Breast epithelium (tissue), 4 donors: ENCODE measurements at regions of chr1 and their contacts with region 1.

Region 1: GRCh38 chr1:37434292-37434907 is 40.0 kb upstream of the ZC3H12A start:
- DNase-seq: peak in 1 of 2 donors; percentile 61
- H3K4me3 ChIP-seq: no peak overlapping the region
- H3K27ac ChIP-seq: no peak overlapping the region
- H3K4me1 ChIP-seq: no peaks in the 10 kb centered on the region
- H3K27me3 ChIP-seq: peaks cover 0 to 16% of the 10 kb centered on the region in 2 donors
- CTCF ChIP-seq: peak; percentile 44 to 91 (median 84)
- POLR2A ChIP-seq: no peak

Region 2: DNA sequence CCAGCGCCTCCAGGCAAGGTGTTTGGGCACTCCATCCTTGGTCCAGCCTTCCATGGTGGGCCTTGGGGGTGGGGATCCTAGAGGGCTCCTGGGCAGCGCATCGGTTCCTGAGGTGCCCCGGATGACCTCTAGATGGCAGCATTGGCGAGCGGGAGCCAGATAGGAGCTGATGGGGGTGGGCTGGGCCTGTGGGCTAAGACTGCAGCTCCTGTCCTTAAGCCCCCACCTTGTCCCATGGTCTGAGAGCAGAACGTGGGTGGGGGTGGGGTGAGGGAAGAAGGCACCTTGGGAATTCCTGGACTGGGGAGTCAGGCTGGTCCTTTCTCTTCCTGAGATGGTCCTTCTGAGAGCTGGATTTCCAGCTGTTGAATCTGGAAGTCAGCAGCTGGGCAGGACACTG is 858.3 kb before region 1 on chr1:
- intact Hi-C with region 1: loop called (anchors 5 kb)
- DNase-seq: no peak
- H3K4me3 ChIP-seq: no peak overlapping the region
- H3K27ac ChIP-seq: no peak overlapping the region
- H3K4me1 ChIP-seq: no peaks in the 10 kb centered on the region
- H3K27me3 ChIP-seq: peaks cover 0 to 37% of the 10 kb centered on the region in 2 donors
- CTCF ChIP-seq: peak in 1 of 3 donors; percentile 60
- POLR2A ChIP-seq: no peak

Region 3: GRCh38 chr1:36703526-36704208 is 730.7 kb before region 1 on chr1:
- intact Hi-C with region 1: loop called (anchors 5 kb)
- DNase-seq: peak; percentile 55 to 71
- H3K4me3 ChIP-seq: no peak overlapping the region
- H3K27ac ChIP-seq: no peak overlapping the region
- H3K4me1 ChIP-seq: no peaks in the 10 kb centered on the region
- H3K27me3 ChIP-seq: peaks cover 0 to 16% of the 10 kb centered on the region in 2 donors
- CTCF ChIP-seq: peak; percentile 69 to 83 (median 70)
- POLR2A ChIP-seq: no peak

Region 4: GRCh38 chr1:37410815-37411214 is 23.6 kb before region 1 on chr1:
- intact Hi-C with region 1: no loop called
- DNase-seq: no peak
- H3K4me3 ChIP-seq: no peak overlapping the region
- H3K27ac ChIP-seq: no peak overlapping the region
- H3K4me1 ChIP-seq: no peaks in the 10 kb centered on the region
- H3K27me3 ChIP-seq: peaks cover 0 to 11% of the 10 kb centered on the region in 2 donors
- CTCF ChIP-seq: no peak
- POLR2A ChIP-seq: no peak

Region 5: DNA sequence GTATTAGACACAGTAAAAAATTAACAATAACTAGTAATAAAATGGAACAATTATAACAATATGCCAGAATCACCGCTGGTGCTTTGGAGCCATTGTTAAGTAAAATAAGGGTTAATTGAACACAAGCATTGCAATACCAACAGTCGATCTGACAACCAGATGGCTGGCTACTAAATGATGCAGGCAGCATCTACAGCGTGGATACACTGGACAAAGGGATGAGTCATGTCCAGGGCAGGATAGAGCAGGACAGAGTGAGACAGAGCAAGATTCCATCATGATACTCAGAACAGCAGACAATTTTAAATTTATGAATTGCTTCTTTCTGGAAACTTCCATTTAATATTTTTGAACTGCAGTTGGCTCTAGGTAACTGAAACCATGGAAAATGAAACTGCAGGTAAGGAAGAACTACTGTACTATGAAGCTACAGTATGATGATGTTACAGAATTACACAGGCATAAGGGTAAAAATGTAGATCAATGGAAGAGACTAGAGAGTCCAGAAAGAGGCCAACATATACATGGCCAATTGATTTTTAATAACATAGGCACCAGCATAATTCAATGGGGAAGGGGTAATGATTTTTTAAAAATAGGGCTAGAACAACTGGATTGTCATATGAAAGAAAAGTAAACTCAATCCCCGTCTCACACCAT is 1256.5 kb after region 1 on chr1:
- intact Hi-C with region 1: loop called (anchors 5 kb)
- DNase-seq: no peak
- H3K4me3 ChIP-seq: no peak overlapping the region
- H3K27ac ChIP-seq: no peak overlapping the region
- H3K4me1 ChIP-seq: no peaks in the 10 kb centered on the region
- H3K27me3 ChIP-seq: peaks cover 0 to 19% of the 10 kb centered on the region in 2 donors
- CTCF ChIP-seq: no peak
- POLR2A ChIP-seq: no peak